HepG2 (cell line): ENCODE measurements at regions of chr18 and their contacts with region 1.

Region 1: GRCh38 chr18:34912010-34912721 is 129.0 kb upstream of the MAPRE2 start:
- DNase-seq: peak; percentile 95
- ATAC-seq: peak; percentile 91
- H3K4me3 ChIP-seq: no peak overlapping the region
- H3K27ac ChIP-seq: peak overlapping the region; percentile 60
- H3K4me1 ChIP-seq: peaks cover 63% of the 10 kb centered on the region
- H3K27me3 ChIP-seq: no peaks in the 10 kb centered on the region
- CTCF ChIP-seq: no peak
- EP300 ChIP-seq: peak in 1 of 2 experiments; percentile 87; a peak in 2 of 4 replicates
- POLR2A ChIP-seq: no peak
- RAD21 ChIP-seq: no peak; the same call in 1 of the 2 replicates

Region 2: DNA sequence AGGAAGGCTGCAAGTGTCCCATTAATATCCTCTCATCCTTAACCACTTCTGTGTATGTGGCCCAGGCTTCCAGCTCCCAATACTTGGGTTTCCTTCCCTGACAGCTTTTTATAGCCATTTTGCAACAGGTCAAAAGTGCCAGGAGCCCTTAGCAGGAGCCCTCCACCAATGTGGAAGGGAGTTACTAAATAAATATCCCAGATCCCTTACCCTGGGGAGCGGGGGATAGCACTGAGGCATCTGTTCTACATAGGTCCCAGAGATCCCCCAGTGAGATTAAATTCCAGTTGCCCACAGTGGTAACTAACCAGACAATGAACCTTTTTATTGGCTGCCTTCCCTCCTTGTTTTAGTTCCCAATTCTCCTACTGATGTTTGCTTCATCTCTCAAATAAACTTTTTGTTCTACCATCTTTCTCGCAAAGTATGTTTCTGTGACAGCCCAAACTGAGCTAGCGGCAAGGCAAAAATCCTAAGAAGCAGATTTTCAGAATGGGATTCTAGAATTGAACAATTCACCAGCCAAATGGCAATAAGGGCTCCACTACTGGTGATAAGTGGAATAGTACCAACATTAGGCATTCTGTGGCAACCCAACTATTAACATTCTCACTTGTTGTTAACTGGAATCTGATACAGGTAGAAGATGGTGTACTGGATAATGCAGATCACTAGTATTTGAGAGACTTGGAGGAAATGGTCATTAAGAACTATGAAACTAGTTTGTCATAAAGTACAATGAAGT is 45.1 kb after region 1 on chr18:
- CTCF ChIA-PET with region 1: no interaction called
- POLR2A ChIA-PET with region 1: no interaction called
- in situ Hi-C with region 1: no loop called
- intact Hi-C with region 1: loop called (anchors 5 kb)
- DNase-seq: peak; percentile 91
- ATAC-seq: peak; percentile 82
- H3K4me3 ChIP-seq: peak overlapping the region in 1 of 3 experiments; percentile 1; a peak in 1 of 6 replicates
- H3K27ac ChIP-seq: peak overlapping the region; percentile 32
- H3K4me1 ChIP-seq: peaks cover 52% of the 10 kb centered on the region
- H3K27me3 ChIP-seq: no peaks in the 10 kb centered on the region
- CTCF ChIP-seq: no peak
- EP300 ChIP-seq: peak in 1 of 2 experiments; percentile 53; a peak in 1 of 4 replicates
- POLR2A ChIP-seq: no peak
- RAD21 ChIP-seq: no peak

Region 3: DNA sequence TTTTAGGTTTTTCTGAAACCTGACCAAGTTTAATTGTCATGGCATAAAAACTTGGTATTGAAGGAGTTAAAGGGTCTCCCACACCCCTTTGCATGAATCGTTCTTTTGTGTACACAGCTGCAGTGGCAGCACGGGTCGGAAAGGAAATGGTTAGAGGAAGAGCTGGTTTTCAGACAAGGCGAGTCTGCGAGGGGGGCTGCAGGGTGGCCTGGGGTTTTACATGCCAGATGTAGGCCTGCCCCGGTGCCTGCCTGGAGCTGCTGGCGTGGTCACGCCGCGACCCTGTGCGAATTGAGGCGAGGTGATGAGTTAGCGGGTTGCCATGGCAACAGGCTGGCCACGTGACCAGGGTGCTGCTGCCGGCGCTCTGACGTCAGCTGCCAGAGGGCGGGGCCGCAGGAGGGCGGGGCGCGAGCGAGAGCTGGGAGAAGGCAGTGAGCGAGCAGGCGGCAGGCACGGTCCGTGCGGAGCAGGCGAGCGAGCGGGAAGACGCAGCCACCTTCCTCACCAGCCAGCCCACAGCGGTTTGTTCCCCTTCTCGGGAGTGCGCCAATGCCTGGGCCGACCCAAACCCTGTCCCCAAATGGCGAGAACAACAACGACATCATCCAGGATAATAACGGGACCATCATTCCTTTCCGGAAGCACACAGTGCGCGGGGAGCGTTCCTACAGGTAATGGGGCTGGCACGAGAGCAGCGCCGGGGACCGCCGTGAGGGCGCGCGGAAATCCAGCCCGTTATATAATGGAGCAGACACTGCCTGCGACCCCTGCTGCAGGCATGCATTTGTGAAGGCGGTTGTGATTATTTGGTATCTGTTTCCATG is 129.0 kb after region 1 on chr18 and contains the start of gene MAPRE2:
- CTCF ChIA-PET with region 1: no interaction called
- POLR2A ChIA-PET with region 1: interaction called, 3 read pairs
- in situ Hi-C with region 1: no loop called
- intact Hi-C with region 1: loop called (anchors 10 kb)
- DNase-seq: peak; percentile 89
- ATAC-seq: peak; percentile 97
- H3K4me3 ChIP-seq: peak within 1 kb of the TSS; percentile 74 to 84 (median 83)
- H3K27ac ChIP-seq: peak within 1 kb of the TSS; percentile 71
- H3K4me1 ChIP-seq: peaks cover 49% of the 10 kb centered on the region
- H3K27me3 ChIP-seq: no peaks in the 10 kb centered on the region
- CTCF ChIP-seq: 0 out of 2 replicates have a peak, but pooled peaks have one; percentile 26
- EP300 ChIP-seq: peak in 1 of 2 experiments; percentile 0; a peak in 1 of 4 replicates
- POLR2A ChIP-seq: peak; percentile 96 to 99
- RAD21 ChIP-seq: 0 out of 2 replicates have a peak, but pooled peaks have one; percentile 39
- total RNA-seq, gene MAPRE2: 34.5 and 59.9 TPM in 2 replicates

Region 4: GRCh38 chr18:35635170-35635569 is 723.0 kb after region 1 on chr18:
- CTCF ChIA-PET with region 1: no interaction called
- POLR2A ChIA-PET with region 1: no interaction called
- in situ Hi-C with region 1: no loop called
- intact Hi-C with region 1: no loop called
- DNase-seq: peak; percentile 4
- ATAC-seq: no peak
- H3K4me3 ChIP-seq: no peak overlapping the region
- H3K27ac ChIP-seq: no peak overlapping the region
- H3K4me1 ChIP-seq: no peaks in the 10 kb centered on the region
- H3K27me3 ChIP-seq: no peaks in the 10 kb centered on the region
- CTCF ChIP-seq: no peak
- EP300 ChIP-seq: no peak
- POLR2A ChIP-seq: no peak
- RAD21 ChIP-seq: no peak